ENCODE measurements at regions of chr11 and their contacts with region 1.

Region 1: GRCh38 chr11:76782526-76783293 is 446 bp upstream of the TSKU start:
- DNase-seq: peak; percentile 35
- H3K4me3 Mint-ChIP-seq: peak overlapping the region; percentile 73
- H3K27ac Mint-ChIP-seq: peak overlapping the region; percentile 78
- H3K4me1 Mint-ChIP-seq: peaks cover 9% of the 10 kb centered on the region
- H3K27me3 Mint-ChIP-seq: peaks cover 40% of the 10 kb centered on the region

Region 2: DNA sequence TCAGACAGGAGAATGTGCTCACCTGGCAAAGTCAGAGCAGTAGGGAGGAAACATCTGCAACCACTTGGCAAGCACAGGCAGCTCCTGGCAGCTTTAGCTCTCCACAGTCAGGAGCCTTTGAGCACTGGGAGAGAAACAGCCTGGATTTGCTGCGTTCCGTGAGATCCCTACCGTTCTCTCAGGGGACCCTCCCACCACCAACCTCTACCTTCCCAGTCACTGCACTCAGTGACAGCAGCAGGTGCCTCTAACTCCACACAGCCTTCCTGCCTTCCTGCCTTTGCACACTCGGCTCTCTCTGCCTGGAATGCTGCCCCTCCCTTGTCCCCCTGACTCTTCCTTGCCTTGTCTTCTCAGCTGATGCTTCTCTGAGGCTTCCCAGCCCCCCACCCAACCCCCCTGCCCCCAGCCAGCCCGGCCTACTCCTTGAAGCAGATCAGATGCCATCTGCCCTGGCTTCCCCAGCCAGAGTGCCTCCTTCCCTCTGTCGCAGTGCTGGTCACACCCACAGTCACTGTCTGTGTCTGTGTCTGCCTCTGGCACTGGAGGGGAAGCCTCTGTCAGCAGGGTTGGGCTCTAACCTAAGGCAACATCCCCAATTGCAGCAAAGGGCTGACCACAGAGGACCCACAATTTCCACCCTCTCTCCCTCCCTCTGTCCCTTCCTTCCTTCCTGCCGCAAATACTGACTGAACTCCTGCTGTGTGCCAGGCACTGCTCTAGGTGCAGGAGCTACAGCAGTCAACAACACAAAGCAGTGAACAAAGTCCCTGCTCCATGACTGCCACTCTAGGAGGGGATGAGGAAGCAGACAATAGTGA is 14.4 kb before region 1 on chr11:
- intact Hi-C with region 1: loop called (anchors 2 kb)
- DNase-seq: peak; percentile 20
- H3K4me3 Mint-ChIP-seq: peak overlapping the region; percentile 70
- H3K27ac Mint-ChIP-seq: peak overlapping the region; percentile 47
- H3K4me1 Mint-ChIP-seq: peaks cover 43% of the 10 kb centered on the region
- H3K27me3 Mint-ChIP-seq: peaks cover 6% of the 10 kb centered on the region

Region 3: DNA sequence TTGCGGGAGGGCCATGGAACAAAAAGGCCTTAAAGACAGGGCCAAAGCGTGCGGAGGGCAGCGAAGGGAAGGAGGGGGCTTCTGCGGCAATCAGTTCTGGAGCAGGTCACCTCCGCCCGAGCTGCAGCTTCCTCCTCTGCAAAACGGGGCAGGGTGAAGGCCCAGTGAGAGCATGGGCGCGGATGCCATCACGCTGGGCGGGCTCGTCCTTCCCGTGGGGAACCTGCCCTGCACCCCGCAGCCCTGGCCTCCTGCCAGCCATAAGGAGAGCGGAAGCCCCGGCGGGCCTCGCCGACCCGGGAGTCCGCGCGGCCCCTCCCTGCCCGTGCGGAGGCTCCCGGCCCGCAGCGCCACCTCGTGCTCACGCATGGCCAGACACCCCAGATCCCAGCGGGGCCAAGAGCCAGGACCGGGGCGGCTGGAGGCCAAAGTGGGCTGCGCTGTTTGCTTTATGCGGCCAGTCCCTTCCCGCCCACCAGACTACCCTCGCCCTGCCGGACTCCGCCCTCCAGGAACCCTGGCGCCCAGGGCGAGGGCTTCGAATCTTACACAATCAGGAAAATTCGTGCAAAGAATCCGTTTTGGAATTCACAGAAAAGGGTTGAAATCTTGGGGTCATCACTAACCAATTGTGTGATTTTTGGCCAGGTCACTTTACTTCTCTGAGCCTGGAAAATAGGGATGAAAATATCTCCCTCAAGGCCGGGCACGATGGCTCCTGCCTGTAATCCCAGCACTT is 16.5 kb after region 1 on chr11:
- intact Hi-C with region 1: loop called (anchors 1 kb)
- DNase-seq: peak; percentile 69
- H3K4me3 Mint-ChIP-seq: no peak overlapping the region
- H3K27ac Mint-ChIP-seq: no peak overlapping the region
- H3K4me1 Mint-ChIP-seq: peaks cover 12% of the 10 kb centered on the region
- H3K27me3 Mint-ChIP-seq: peaks cover 48% of the 10 kb centered on the region

Region 4: DNA sequence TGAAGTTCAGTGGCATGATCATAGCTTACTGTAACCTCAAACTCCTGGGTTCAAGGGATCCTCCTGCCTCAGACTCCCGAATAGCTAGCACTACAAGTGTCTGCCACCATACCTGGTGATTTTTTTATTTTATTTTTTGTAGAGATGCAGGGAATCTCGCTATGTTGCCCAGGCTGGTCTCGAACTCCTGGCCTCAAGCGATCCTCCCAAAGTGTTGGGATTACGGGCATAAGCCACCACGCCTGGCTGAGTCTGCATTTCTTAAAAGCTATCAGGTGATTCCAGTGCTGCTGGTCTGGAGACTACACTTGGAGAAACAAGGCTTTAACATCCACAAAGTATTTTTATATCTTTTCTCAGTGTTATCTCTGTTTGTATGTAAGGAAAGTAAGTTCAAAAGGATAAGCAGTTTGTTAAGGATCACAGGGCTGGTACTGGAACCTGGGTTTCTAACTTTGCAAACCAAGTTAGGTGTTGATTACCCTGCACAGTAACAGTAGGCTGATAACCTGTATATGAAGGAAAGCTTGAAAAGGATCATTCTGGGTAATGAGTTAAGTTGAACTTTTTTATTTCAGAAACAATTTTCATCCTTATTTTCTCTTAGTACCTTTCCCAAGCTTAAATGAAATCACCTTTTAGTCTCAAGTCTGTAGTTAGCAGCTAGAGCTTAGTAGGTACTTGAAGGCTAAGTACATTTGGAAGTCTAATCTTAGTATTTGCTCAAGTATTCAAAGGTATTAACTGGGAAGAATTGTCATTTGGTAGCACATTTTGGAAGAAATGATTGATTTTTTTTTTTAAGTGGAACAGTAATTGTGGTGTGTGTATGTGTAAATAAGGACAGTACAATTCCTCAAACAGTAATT is 90.5 kb after region 1 on chr11:
- intact Hi-C with region 1: no loop called
- DNase-seq: no peak
- H3K4me3 Mint-ChIP-seq: no peak overlapping the region
- H3K27ac Mint-ChIP-seq: no peak overlapping the region
- H3K4me1 Mint-ChIP-seq: no peaks in the 10 kb centered on the region
- H3K27me3 Mint-ChIP-seq: no peaks in the 10 kb centered on the region

Measured in activated T-helper 1 cell treated with anti-CD3 and anti-CD28 coated beads, Interleukin-12 subunit alpha, Interleukin-12 subunit beta, Interleukin-2, Interleukin-4 antibody, amounts not matched to agents 30 ng/mL and 10 ng/mL and 1 ng/mL, durations not matched to agents 14 hours and 24 hours and 36 hours (primary cell).